Brain microvascular endothelial cell (primary cell): ENCODE measurements at regions of chr4 and their contacts with region 1.

Region 1: GRCh38 chr4:74133786-74134499 is 24.0 kb upstream of the MTHFD2L start:
- DNase-seq: peak; percentile 95
- H3K4me3 ChIP-seq: no peak overlapping the region
- H3K27ac ChIP-seq: peak overlapping the region; percentile 10
- H3K27me3 ChIP-seq: no peaks in the 10 kb centered on the region
- CTCF ChIP-seq: peak; percentile 85

Region 2: GRCh38 chr4:73653695-73654106 is 480.2 kb before region 1 on chr4:
- in situ Hi-C with region 1: loop called (anchors 25 kb)
- DNase-seq: no peak
- H3K4me3 ChIP-seq: no peak overlapping the region
- H3K27ac ChIP-seq: no peak overlapping the region
- H3K27me3 ChIP-seq: no peaks in the 10 kb centered on the region
- CTCF ChIP-seq: peak; percentile 68